Naive thymus-derived CD4-positive, alpha-beta T cell (primary cell): ENCODE measurements at regions of chr1 and their contacts with region 1.

Region 1: DNA sequence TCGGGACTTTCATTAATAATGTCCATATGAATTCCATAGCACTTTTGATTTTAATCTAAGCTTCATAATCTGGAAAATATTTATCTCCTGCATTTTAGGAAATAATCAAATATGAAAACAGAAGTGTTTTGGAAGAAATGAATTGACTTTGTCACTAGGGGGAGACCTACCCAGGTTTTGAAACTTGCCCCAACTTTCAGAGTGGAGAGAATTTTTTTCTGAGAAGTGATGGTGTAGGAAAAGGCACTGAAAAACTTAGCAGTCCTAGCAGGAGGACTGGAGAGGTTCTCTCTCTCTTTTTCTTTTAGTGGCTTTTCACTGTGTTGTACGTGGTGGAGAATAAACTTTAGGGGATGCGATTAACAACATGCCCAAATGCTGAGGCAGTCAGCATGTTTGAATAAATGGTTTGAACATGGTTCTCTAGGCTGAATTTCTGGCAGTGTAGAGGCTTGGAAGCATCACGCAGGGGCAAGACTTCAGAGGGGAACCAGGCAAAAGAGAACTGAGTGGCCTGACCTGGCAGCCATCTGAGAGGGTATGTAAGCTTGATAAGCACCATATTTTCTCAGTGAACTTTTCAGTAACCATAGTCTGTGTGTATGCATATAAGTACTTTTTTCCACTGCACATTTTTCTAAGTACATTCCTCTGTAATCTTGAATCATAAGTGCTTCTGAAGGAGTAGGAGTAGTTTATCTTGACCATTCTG is 68.3 kb upstream of the NEK7 start:
- DNase-seq: peak in 6 of 9 donors; percentile 9 to 52 (median 37)
- ATAC-seq: peak; percentile 40
- H3K4me3 ChIP-seq: no peak overlapping the region
- H3K4me3 Mint-ChIP-seq: no peak overlapping the region
- H3K27ac ChIP-seq: no peak overlapping the region
- H3K27ac Mint-ChIP-seq: no peak overlapping the region
- H3K4me1 ChIP-seq: no peaks in the 10 kb centered on the region
- H3K4me1 Mint-ChIP-seq: peaks cover 0 to 7% (median 3%) of the 10 kb centered on the region in 7 donors
- H3K27me3 ChIP-seq: no peaks in the 10 kb centered on the region
- H3K27me3 Mint-ChIP-seq: peaks cover 0 to 8% (median 4%) of the 10 kb centered on the region in 5 donors

Region 2: DNA sequence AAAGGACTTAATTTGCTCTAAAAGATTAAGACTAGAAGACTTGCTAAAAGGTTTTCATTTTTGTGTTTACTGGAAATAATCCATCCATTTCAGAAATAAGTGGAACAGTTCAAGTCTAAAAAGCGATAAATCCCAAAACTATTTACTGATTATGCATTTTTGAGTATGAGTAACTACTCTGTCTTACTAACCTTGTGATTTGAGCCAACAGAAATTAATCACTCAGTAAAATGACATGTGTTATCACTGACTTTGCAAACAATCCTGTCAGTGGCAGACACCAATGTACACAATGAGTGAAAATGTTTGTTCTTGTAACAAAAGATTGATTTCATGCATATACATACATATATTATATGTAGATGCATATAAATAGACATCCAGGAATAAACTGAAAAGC is 531.2 kb before region 1 on chr1:
- CTCF ChIA-PET with region 1: no interaction called
- POLR2A ChIA-PET with region 1: no interaction called
- intact Hi-C with region 1: no loop called
- DNase-seq: no peak
- ATAC-seq: no peak
- H3K4me3 ChIP-seq: no peak overlapping the region
- H3K4me3 Mint-ChIP-seq: no peak overlapping the region
- H3K27ac ChIP-seq: no peak overlapping the region
- H3K27ac Mint-ChIP-seq: no peak overlapping the region
- H3K4me1 ChIP-seq: no peaks in the 10 kb centered on the region
- H3K4me1 Mint-ChIP-seq: no peaks in the 10 kb centered on the region
- H3K27me3 ChIP-seq: no peaks in the 10 kb centered on the region
- H3K27me3 Mint-ChIP-seq: no peaks in the 10 kb centered on the region

Region 3: GRCh38 chr1:198199105-198199504 is 110.6 kb after region 1 on chr1:
- CTCF ChIA-PET with region 1: interaction called, 4 read pairs
- POLR2A ChIA-PET with region 1: no interaction called
- intact Hi-C with region 1: loop called in 1 of 2 experiments (anchors 5 kb)
- DNase-seq: no peak
- ATAC-seq: no peak
- H3K4me3 ChIP-seq: no peak overlapping the region
- H3K4me3 Mint-ChIP-seq: peak overlapping the region in 2 of 10 donors; percentile 21 to 43
- H3K27ac ChIP-seq: no peak overlapping the region
- H3K27ac Mint-ChIP-seq: peak overlapping the region in 1 of 9 donors; percentile 31
- H3K4me1 ChIP-seq: peaks cover 11 to 60% of the 10 kb centered on the region in 2 donors
- H3K4me1 Mint-ChIP-seq: peaks cover 46 to 89% (median 78%) of the 10 kb centered on the region in 7 donors
- H3K27me3 ChIP-seq: no peaks in the 10 kb centered on the region
- H3K27me3 Mint-ChIP-seq: no peaks in the 10 kb centered on the region

Region 4: DNA sequence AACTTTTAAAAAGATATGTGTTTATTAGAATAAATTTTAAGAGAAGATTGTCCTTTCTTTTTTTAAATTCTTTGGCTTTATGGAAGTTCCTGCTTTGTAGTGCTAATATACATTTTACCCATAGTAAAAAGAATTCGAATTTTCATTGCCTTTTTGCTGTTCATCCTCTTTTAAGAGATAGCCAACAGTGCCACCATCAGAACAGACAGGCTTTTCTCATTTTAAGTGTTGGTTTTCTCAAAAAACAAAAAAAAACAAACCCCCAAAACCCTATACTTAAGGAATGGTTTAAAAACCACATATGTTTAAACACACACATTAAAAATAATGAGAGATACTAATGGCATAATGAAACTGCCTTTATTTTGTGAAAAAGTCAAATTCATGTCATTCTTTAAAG is 187.1 kb after region 1 on chr1:
- CTCF ChIA-PET with region 1: interaction called, 3 read pairs
- POLR2A ChIA-PET with region 1: no interaction called
- intact Hi-C with region 1: loop called in 1 of 2 experiments (anchors 1 kb)
- DNase-seq: peak in 1 of 9 donors; percentile 14
- ATAC-seq: no peak
- H3K4me3 ChIP-seq: no peak overlapping the region
- H3K4me3 Mint-ChIP-seq: no peak overlapping the region
- H3K27ac ChIP-seq: no peak overlapping the region
- H3K27ac Mint-ChIP-seq: no peak overlapping the region
- H3K4me1 ChIP-seq: no peaks in the 10 kb centered on the region
- H3K4me1 Mint-ChIP-seq: peaks cover 6 to 29% (median 14%) of the 10 kb centered on the region in 7 donors
- H3K27me3 ChIP-seq: no peaks in the 10 kb centered on the region
- H3K27me3 Mint-ChIP-seq: no peaks in the 10 kb centered on the region

Region 5: DNA sequence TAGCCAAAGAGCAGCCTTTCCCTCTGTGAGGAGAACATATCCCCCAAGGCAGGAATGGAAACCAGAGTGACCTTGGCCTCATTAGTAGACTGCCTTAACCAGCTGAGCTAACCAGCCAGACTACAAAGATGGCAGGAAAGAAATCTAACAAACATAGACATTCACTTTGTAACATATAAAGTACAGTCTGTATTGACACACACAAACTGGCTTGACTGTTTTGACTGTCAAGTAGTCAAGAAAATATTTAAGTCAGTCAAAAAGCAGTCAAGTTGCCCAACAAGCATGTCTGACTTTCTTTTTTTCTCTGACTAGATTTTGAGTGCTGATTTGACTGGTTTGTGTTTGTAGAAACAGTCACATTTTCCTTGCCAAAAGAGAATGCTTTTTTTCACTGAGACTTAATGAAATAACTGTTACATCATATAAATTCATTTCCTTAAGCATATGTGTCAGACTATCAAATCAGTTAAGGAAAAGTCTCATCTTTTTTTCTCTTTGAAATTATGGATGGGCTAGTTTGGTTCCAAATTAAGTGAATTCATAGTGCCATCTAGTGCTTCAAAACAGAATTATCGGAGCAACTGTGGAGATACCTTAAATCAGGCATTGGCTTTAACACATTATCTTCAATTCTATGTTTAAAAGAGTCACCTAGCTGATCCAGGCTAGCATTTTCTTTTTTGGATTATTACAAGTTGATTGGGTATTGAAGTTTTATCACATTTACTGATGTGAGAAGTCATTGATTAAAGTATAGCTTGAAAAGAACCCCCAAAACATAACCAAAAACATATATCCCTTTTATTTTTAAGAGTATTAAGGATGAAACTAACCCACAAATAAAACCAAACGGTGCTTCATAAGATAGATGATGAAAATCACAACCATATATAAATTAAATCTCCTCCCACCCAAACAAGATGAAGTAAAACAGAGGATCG is 377.0 kb after region 1 on chr1:
- CTCF ChIA-PET with region 1: interaction called, 6 read pairs
- POLR2A ChIA-PET with region 1: no interaction called
- intact Hi-C with region 1: loop called (anchors 1 kb)
- DNase-seq: peak in 6 of 9 donors; percentile 3 to 57 (median 40)
- ATAC-seq: peak; percentile 71
- H3K4me3 ChIP-seq: no peak overlapping the region
- H3K4me3 Mint-ChIP-seq: no peak overlapping the region
- H3K27ac ChIP-seq: no peak overlapping the region
- H3K27ac Mint-ChIP-seq: no peak overlapping the region
- H3K4me1 ChIP-seq: no peaks in the 10 kb centered on the region
- H3K4me1 Mint-ChIP-seq: peaks cover 0 to 5% (median 0%) of the 10 kb centered on the region in 7 donors
- H3K27me3 ChIP-seq: no peaks in the 10 kb centered on the region
- H3K27me3 Mint-ChIP-seq: no peaks in the 10 kb centered on the region